Naive thymus-derived CD4-positive, alpha-beta T cell (primary cell): ENCODE measurements at regions of chr1 and their contacts with region 1.

Region 1: DNA sequence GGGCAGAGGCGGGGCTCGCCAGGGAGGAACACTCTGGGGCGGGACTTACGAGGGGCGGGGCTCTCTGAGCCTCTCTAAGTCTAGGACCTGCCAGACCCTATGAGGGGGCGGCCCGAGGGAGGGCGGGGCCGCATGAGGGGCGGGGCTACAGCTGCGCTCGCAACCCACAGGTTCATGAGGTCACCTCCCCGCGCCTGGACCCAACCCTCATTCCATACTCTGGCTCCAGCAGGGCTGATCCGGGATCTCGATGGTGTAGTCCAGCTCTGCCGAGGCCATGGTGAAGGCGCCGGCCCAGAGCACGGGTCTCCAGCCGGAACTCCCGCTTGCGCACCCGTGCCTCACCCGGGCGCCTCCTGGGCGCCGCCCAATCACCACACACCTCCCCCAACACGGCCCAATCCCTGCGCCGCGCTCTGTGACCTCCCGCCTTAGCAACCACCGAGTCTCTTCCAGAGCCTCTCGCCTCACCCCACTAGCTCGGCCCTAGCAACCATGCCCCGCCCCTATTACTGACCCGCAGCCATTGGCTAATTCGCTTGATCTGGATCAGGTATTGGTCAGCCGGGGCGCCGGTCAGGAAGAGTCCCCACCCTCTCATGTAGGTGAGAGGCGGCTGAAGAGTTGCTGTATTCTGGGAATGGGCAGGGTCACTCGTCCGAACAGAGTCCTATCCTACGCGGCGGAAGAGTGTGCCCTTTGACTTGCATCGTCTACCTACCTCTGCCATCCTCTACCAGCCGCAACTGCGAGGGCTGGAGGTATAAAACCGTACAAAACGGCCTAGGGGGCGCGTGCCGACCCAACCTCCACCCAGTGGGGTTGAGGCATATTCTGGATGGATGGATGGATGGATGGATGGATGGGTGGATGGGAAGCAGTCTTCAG is at the starts of genes ARMH1 and TMEM53:
- DNase-seq: peak; percentile 91 to 96 (median 95)
- ATAC-seq: peak; percentile 94
- H3K4me3 ChIP-seq: peak within 1 kb of the TSS; percentile 81
- H3K4me3 Mint-ChIP-seq: peak within 1 kb of the TSS; percentile 83 to 94 (median 91)
- H3K27ac ChIP-seq: peak within 1 kb of the TSS; percentile 76
- H3K27ac Mint-ChIP-seq: peak within 1 kb of the TSS; percentile 84 to 94 (median 91)
- H3K4me1 ChIP-seq: peaks cover 0 to 6% of the 10 kb centered on the region in 2 donors
- H3K4me1 Mint-ChIP-seq: peaks cover 13 to 34% (median 23%) of the 10 kb centered on the region in 7 donors
- H3K27me3 ChIP-seq: no peaks in the 10 kb centered on the region
- H3K27me3 Mint-ChIP-seq: no peaks in the 10 kb centered on the region
- total RNA-seq, gene ARMH1: 65.8 to 205 (median 87.0) TPM
- total RNA-seq, gene TMEM53: 1.6 to 3.5 (median 1.9) TPM

Region 2: GRCh38 chr1:43946236-43947060 is 727.9 kb before region 1 on chr1 and contains the start of gene IPO13:
- CTCF ChIA-PET with region 1: no interaction called
- POLR2A ChIA-PET with region 1: no interaction called
- intact Hi-C with region 1: no loop called
- DNase-seq: peak; percentile 92 to 99 (median 96)
- ATAC-seq: peak; percentile 98
- H3K4me3 ChIP-seq: peak within 1 kb of the TSS; percentile 86
- H3K4me3 Mint-ChIP-seq: peak within 1 kb of the TSS; percentile 87 to 96 (median 90)
- H3K27ac ChIP-seq: peak within 1 kb of the TSS; percentile 97
- H3K27ac Mint-ChIP-seq: peak within 1 kb of the TSS; percentile 84 to 98 (median 94)
- H3K4me1 ChIP-seq: peaks cover 17% of the 10 kb centered on the region in 2 donors
- H3K4me1 Mint-ChIP-seq: peaks cover 37 to 68% (median 56%) of the 10 kb centered on the region in 7 donors
- H3K27me3 ChIP-seq: no peaks in the 10 kb centered on the region
- H3K27me3 Mint-ChIP-seq: no peaks in the 10 kb centered on the region
- total RNA-seq, gene IPO13: 10.1 to 32.3 (median 17.0) TPM

Region 3: DNA sequence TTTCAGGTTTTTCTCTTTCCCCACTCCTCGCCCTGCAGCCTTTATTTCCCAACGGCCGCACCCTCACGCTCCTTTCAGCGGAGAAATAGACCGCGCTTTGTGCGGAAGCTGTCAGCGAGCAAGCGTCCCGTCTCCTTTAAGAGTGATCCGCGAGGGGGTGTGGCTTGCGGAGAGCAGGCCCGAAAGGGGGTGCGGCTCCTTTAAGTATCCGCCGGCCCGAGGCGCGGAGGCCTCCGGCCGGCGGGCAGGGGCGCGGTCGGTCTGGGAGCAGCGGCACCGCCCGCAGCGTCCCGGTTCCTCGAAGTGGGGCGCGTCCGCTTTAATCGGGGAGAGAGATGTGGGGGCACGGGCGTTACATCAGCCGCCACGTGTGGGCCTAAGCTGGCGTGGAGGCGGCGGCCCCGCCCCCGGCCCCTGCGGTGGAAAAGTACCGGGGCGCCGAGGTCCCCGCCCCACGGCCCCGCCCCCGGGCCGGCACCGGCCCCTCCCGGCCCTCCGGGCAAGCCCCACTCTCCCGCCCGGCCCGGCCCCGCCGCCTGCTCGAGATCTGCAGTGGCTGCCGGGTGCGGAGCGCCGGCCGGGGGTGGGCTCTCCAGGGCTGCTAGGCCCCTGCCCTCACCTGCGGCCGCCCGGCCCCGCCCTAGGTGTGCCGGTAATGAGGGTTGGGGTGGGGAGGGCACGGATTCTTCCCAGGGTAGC is 644.3 kb before region 1 on chr1:
- CTCF ChIA-PET with region 1: no interaction called
- POLR2A ChIA-PET with region 1: no interaction called
- intact Hi-C with region 1: loop called in 1 of 2 experiments (anchors 1 kb)
- DNase-seq: peak; percentile 73 to 90 (median 85)
- ATAC-seq: peak; percentile 90
- H3K4me3 ChIP-seq: peak overlapping the region; percentile 61
- H3K4me3 Mint-ChIP-seq: peak overlapping the region; percentile 94 to 99 (median 97)
- H3K27ac ChIP-seq: peak overlapping the region; percentile 78
- H3K27ac Mint-ChIP-seq: peak overlapping the region; percentile 92 to 98 (median 94)
- H3K4me1 ChIP-seq: peaks cover 0 to 7% of the 10 kb centered on the region in 2 donors
- H3K4me1 Mint-ChIP-seq: peaks cover 16 to 40% (median 23%) of the 10 kb centered on the region in 7 donors
- H3K27me3 ChIP-seq: no peaks in the 10 kb centered on the region
- H3K27me3 Mint-ChIP-seq: no peaks in the 10 kb centered on the region

Region 4: DNA sequence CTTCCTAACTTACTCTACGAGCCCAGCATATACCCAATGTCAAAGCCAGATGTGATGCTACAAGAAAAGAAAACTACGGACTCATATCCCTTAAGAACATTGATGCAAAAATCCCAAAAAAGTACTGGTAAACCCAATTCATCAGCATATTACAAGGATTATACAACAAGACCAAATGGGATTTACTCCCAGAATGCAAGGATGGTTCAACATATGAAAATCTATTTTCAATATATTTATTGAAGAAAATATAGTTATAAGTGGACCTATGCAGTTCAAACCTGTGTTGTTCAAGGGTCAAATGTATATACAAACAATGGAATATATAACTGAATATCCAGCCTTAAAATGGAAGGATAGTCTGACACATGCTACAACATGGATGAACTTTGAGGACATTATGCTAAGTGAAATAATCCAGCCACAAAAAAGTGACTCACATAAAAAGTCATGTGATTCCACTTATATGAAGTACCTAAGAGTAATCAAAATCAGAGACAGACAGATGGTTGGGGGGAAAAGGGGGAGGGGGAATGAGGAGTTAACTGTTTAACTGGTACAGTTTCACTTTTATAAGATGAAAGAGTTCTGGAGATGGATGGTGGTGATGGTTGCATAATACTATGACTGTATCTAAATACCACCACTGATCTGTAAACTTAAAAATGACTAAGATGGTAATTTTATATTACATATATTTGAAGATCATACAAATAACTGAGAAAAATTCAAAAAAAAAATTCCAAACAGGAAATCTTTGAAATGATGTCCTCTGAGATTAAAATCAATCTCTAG is 529.2 kb before region 1 on chr1:
- CTCF ChIA-PET with region 1: no interaction called
- POLR2A ChIA-PET with region 1: no interaction called
- intact Hi-C with region 1: no loop called
- DNase-seq: no peak
- ATAC-seq: no peak
- H3K4me3 ChIP-seq: no peak overlapping the region
- H3K4me3 Mint-ChIP-seq: no peak overlapping the region
- H3K27ac ChIP-seq: no peak overlapping the region
- H3K27ac Mint-ChIP-seq: no peak overlapping the region
- H3K4me1 ChIP-seq: no peaks in the 10 kb centered on the region
- H3K4me1 Mint-ChIP-seq: no peaks in the 10 kb centered on the region
- H3K27me3 ChIP-seq: no peaks in the 10 kb centered on the region
- H3K27me3 Mint-ChIP-seq: peaks cover 5 to 15% (median 14%) of the 10 kb centered on the region in 5 donors

Region 5: GRCh38 chr1:44354840-44355581 is 319.3 kb before region 1 on chr1 and contains the start of gene ERI3:
- CTCF ChIA-PET with region 1: no interaction called
- POLR2A ChIA-PET with region 1: no interaction called
- intact Hi-C with region 1: loop called in 1 of 2 experiments (anchors 1 kb)
- DNase-seq: peak; percentile 91 to 97 (median 95)
- ATAC-seq: peak; percentile 100
- H3K4me3 ChIP-seq: peak within 1 kb of the TSS; percentile 83
- H3K4me3 Mint-ChIP-seq: peak within 1 kb of the TSS; percentile 83 to 98 (median 96)
- H3K27ac ChIP-seq: peak within 1 kb of the TSS; percentile 82
- H3K27ac Mint-ChIP-seq: peak within 1 kb of the TSS; percentile 87 to 94 (median 90)
- H3K4me1 ChIP-seq: peaks cover 11 to 12% of the 10 kb centered on the region in 2 donors
- H3K4me1 Mint-ChIP-seq: peaks cover 15 to 52% (median 46%) of the 10 kb centered on the region in 7 donors
- H3K27me3 ChIP-seq: no peaks in the 10 kb centered on the region
- H3K27me3 Mint-ChIP-seq: no peaks in the 10 kb centered on the region
- total RNA-seq, gene ERI3: 28.7 to 37.7 (median 36.2) TPM

Region 6: DNA sequence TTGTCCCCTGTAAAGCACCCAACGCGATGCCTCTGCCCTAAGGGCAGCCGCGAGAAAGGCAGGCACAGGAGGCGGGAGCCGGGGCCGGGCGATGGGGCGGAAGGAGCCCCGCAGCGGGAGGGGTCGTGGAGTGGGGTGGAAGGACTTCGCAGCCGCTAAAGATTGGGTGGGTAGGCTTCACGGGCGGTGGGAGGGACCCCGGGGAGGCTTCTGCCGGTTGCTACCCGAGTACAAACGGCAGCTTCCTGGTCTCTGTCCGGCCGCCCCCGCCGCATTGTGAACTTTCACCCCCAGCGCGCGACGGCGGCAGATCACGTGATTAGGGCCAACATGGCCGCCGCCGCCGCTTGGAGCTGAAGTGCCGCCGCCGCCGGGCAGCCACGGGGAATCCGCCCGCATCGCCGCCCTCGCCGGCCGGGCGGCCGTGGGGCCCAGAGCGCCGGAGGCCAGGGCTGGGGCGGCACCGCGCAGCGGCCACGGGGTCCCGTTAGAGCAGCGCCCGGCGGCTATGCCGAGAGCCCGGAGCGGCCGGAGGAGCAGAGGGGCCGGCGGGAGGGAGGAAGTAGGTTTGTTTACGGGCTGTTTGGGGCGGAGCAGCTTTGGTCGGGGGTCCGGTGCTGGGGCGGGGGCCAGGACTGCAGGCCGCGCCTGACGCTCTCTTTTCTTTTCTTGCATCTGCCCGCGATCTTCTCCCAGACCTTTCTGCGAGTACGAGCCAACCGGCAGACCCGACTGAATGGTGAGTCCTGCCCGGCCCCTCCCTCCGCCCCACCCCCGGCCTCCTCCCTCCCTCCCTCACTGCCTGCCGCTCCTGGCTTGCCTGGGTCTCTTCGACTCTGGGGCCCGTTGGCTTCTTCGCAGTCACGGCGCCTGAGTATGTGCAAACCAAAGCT is 42.5 kb before region 1 on chr1:
- CTCF ChIA-PET with region 1: no interaction called
- POLR2A ChIA-PET with region 1: interaction called, 24 read pairs
- intact Hi-C with region 1: loop called (anchors 1 kb)
- DNase-seq: peak; percentile 80 to 92 (median 87)
- ATAC-seq: peak; percentile 87
- H3K4me3 ChIP-seq: peak overlapping the region; percentile 70
- H3K4me3 Mint-ChIP-seq: peak overlapping the region; percentile 69 to 95 (median 90)
- H3K27ac ChIP-seq: peak overlapping the region; percentile 85
- H3K27ac Mint-ChIP-seq: peak overlapping the region; percentile 46 to 99 (median 97)
- H3K4me1 ChIP-seq: peaks cover 8 to 13% of the 10 kb centered on the region in 2 donors
- H3K4me1 Mint-ChIP-seq: peaks cover 26 to 50% (median 39%) of the 10 kb centered on the region in 7 donors
- H3K27me3 ChIP-seq: no peaks in the 10 kb centered on the region
- H3K27me3 Mint-ChIP-seq: no peaks in the 10 kb centered on the region

Region 7: DNA sequence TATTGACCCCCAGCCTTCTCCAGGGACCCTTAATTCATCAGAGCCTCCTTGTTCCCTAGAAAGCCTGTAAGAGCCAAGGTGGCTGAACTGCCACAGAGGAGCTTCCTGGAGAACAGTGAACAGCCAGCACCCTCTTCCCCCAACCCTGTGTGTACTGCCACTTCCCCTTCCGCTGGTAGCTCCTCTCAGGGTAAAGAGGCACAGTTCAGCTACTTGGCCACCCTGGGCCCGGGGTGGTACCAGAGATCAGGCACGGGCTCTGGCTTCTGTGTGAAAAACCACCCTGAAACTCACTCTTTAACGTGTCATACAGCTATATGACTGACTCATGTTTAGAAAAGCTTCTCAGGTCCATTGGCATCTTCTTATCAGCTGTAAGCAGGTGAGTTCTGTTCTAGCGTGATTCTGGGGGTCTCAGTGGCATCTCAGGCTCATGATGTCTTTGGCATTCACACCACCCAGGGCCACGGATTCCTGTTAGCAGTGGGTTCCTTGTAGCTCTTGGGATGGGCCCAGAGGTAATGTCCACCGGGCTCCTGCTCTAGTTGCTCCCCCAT is 22.5 kb after region 1 on chr1:
- CTCF ChIA-PET with region 1: interaction called, 5 read pairs
- POLR2A ChIA-PET with region 1: interaction called, 15 read pairs
- intact Hi-C with region 1: loop called in 1 of 2 experiments (anchors 1 kb)
- DNase-seq: peak in 8 of 9 donors; percentile 20 to 58 (median 47)
- ATAC-seq: peak; percentile 92
- H3K4me3 ChIP-seq: no peak overlapping the region
- H3K4me3 Mint-ChIP-seq: peak overlapping the region; percentile 42 to 71 (median 62)
- H3K27ac ChIP-seq: peak overlapping the region; percentile 71
- H3K27ac Mint-ChIP-seq: peak overlapping the region; percentile 69 to 93 (median 84)
- H3K4me1 ChIP-seq: peaks cover 6 to 15% of the 10 kb centered on the region in 2 donors
- H3K4me1 Mint-ChIP-seq: peaks cover 13 to 26% (median 17%) of the 10 kb centered on the region in 7 donors
- H3K27me3 ChIP-seq: no peaks in the 10 kb centered on the region
- H3K27me3 Mint-ChIP-seq: no peaks in the 10 kb centered on the region

Region 8: DNA sequence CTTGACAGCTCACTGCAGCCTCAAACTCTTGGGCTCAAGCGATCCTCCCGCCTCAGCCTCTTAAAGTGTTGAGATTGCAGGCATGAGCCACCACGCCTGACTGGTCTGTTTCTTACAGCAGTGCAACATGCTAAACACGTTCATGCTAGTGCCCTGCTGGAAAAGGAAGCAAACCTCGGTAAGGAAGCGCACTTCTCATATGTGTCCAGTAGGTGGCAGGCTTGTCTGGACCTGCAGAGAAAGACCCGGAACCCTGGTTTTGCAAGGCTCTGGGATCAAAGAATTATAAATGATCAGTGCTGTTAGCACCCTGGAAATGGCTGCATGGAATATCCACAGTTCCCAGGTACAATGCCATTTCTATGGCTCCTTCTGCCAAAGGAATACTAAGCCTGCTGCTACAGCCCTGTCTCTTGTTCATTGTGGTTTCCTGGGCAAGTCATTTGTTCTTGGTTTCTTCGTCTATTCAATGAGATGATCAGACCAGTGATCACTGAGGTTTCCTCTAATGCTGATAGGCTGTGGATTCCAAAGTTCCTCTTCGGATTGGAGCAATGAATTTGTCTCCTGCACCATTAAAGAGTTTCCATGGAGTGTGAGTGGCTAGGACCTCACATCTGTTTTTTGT is 40.7 kb after region 1 on chr1:
- CTCF ChIA-PET with region 1: no interaction called
- POLR2A ChIA-PET with region 1: interaction called, 3 read pairs
- intact Hi-C with region 1: loop called in 1 of 2 experiments (anchors 2 kb)
- DNase-seq: peak; percentile 46 to 77 (median 69)
- ATAC-seq: peak; percentile 98
- H3K4me3 ChIP-seq: peak overlapping the region; percentile 28
- H3K4me3 Mint-ChIP-seq: peak overlapping the region; percentile 24 to 72 (median 66)
- H3K27ac ChIP-seq: peak overlapping the region; percentile 39
- H3K27ac Mint-ChIP-seq: peak overlapping the region; percentile 40 to 85 (median 68)
- H3K4me1 ChIP-seq: peaks cover 11 to 37% of the 10 kb centered on the region in 2 donors
- H3K4me1 Mint-ChIP-seq: peaks cover 39 to 52% (median 47%) of the 10 kb centered on the region in 7 donors
- H3K27me3 ChIP-seq: no peaks in the 10 kb centered on the region
- H3K27me3 Mint-ChIP-seq: peaks cover 0 to 9% (median 0%) of the 10 kb centered on the region in 5 donors

Region 9: DNA sequence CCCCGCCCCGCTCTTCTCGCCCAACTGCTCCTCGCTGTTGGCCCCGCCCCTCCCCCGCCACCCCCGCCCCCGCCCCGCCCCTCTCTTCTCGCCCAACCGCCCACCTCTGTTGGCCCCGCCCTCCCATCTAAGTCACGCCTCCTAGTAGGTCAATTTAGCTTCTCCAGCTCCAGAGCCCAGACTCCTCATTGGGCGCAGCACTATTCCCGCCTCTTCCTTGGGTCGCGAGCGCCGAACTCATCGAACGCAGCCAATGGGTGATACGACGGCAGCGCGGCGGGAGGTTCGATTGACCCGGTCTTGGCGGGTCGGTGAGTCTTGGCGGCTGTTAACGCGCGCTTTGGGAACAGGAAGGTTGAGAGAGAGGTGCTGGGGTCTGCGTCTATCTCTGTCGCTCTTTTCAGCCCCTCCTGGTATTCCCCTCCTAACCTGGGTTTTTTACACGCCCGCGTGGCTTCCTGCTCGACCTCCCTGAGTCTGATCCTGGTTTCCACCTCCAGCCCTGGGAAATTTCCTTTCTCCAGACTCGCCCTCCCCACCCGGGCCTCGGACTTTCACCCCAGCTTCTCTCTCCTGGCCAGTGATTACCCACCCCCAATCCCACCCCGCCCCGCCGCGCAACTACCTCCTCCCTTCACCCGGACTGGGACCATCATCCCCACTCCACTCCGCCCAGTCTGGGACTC is 1573.2 kb after region 1 on chr1 and contains the start of gene RAD54L:
- CTCF ChIA-PET with region 1: no interaction called
- POLR2A ChIA-PET with region 1: interaction called, 7 read pairs
- intact Hi-C with region 1: loop called in 1 of 2 experiments (anchors 2 kb)
- DNase-seq: peak; percentile 83 to 97 (median 95)
- ATAC-seq: peak; percentile 99
- H3K4me3 ChIP-seq: peak within 1 kb of the TSS; percentile 89
- H3K4me3 Mint-ChIP-seq: peak within 1 kb of the TSS; percentile 86 to 100 (median 94)
- H3K27ac ChIP-seq: peak within 1 kb of the TSS; percentile 66
- H3K27ac Mint-ChIP-seq: peak within 1 kb of the TSS; percentile 62 to 96 (median 78)
- H3K4me1 ChIP-seq: peaks cover 4 to 8% of the 10 kb centered on the region in 2 donors
- H3K4me1 Mint-ChIP-seq: peaks cover 0 to 41% (median 17%) of the 10 kb centered on the region in 7 donors
- H3K27me3 ChIP-seq: no peaks in the 10 kb centered on the region
- H3K27me3 Mint-ChIP-seq: no peaks in the 10 kb centered on the region
- total RNA-seq, gene RAD54L: 0.94 to 31.9 (median 2.1) TPM